ENCODE measurements at regions of chr10 and their contacts with region 1.

Region 1: DNA sequence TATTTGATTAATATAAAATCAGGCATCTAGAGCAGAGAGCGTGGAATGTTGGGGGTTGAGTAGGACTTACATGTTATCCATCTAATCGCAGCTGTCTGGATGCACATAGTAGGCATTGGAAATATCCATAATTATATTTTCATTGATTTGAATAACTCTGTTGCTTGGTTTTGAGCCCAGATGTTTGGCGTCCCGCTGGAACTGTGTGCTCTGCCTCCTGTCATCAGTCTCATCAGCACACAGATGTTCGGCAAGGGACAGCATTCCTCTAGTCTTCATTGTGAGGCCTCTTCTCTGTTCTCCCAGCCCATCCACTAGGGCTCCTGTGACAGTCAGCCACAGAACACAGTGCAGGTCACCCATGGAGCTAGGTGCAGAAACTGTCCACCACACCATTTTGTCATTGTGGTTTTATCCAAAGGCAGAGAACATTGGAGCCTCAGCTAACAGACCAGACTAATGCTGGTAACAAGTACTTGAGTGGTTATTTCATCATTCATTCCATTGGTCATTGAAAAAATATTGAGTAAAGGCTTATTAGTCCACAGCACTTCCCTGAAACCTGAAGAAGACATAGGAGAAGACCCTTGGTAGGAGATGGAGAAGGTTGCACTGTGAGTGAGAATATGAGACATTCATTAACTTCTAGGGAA is 927.4 kb downstream of the LRMDA start:
- DNase-seq: no peak
- ATAC-seq: peak in 1 of 8 donors; percentile 22
- H3K4me3 ChIP-seq: no peak overlapping the region
- H3K27ac ChIP-seq: no peak overlapping the region
- H3K4me1 ChIP-seq: no peaks in the 10 kb centered on the region
- H3K27me3 ChIP-seq: no peaks in the 10 kb centered on the region
- CTCF ChIP-seq: no peak

Region 2: DNA sequence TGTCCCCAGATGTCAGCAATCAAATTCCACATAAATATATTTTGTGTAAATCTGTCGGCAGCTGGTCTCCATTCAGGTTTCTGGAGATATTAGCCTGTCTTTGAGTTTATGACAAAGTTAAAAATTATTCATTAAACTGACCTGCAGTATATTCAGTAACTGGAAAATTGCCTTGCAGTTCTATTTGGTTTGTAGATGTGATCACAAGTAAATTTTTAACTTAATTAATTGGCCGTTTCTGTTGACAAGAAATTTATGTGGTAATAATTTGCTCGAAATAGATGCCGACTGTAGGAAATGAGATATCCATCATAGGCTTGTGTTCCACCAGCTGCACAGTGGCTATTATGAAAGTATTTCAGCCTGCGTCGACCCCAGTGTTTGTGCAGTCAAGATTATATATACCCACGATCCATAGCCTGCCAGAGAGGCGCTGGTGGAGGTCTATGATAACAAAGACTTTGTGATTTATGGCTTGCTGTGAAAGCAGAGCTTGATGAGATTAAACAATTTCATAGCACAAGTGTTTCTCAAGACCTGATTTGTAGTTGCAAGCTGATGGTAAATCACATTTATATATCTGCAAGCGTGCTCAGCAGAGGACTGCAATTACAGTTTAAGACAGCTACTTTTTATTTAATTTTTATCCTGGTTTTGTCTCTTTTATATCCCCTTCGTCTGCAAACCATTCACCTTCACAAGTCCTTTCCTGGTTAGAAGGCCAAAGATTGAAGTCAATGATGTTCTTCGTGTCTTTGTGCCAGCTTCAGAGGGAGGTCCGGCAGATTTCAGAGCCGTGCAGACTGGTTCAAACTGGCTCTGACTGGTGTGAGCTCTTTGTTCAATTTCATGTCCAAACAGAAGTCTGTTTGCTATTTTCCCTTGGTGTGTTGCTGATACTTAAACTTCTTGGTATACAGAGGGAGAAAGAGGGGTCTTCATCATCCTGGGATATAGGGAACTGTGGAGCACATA is 76.5 kb before region 1 on chr10:
- intact Hi-C with region 1: no loop called
- DNase-seq: no peak
- ATAC-seq: no peak
- H3K4me3 ChIP-seq: no peak overlapping the region
- H3K27ac ChIP-seq: no peak overlapping the region
- H3K4me1 ChIP-seq: peaks cover 0 to 9% (median 0%) of the 10 kb centered on the region in 9 donors
- H3K27me3 ChIP-seq: no peaks in the 10 kb centered on the region
- CTCF ChIP-seq: no peak

Region 3: DNA sequence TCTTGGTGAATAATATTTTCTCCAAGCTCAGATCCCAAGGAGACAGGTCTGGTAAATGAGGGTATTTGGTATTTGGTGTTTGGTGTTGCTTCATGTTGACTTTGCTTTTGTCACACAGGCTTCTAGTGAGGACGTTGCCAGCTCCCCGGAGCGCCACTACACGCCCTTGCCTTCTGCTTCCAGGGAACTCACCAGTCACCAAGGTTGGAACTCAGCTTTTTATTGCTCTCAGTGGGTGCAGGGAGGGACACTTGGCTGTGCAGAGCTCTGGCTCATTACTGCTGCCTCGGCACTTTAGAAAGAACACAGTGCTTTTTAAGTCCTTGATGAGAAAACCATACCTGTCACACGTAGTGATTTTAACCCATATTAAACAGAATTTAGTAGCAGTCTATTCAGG is 34.6 kb before region 1 on chr10:
- intact Hi-C with region 1: loop called in 1 of 10 experiments (anchors 1 kb)
- DNase-seq: peak in 1 of 2 donors; percentile 44
- ATAC-seq: peak in 7 of 8 donors; percentile 47 to 94 (median 79)
- H3K4me3 ChIP-seq: no peak overlapping the region
- H3K27ac ChIP-seq: no peak overlapping the region
- H3K4me1 ChIP-seq: peaks cover 0 to 9% (median 0%) of the 10 kb centered on the region in 9 donors
- H3K27me3 ChIP-seq: no peaks in the 10 kb centered on the region
- CTCF ChIP-seq: no peak